ENCODE measurements at regions of chr1 and their contacts with region 1.

Region 1: DNA sequence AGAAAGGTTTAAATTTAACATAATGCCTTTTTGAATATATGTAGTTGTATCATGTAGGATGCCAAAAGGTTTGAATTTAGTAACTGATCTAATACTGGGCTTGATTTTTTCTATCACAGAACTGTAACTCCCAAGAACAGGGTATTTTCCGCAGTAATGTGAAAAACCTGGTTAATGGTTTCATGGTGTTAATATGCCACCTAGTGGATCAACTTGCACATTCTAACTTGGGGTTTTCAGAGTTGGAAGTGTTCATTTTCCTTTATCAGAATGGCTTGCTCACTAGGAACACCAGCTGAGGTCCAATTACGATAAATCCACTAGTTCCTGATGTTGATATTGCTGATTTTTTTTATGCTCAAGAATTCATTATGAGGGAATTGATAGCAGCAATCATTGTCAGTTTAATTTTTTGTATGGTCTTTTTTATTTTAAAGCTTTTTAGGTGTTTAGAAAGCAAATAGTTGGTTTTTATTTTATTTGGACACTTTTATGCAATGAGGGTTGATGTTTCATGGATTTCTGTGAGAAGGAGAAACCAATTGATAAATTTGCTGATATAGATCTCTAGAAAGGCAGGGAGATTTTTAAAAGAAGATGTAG is 157.2 kb downstream of the PLA2G4A start:
- DNase-seq: peak; percentile 77
- H3K4me3 ChIP-seq: no peak overlapping the region
- H3K27ac ChIP-seq: no peak overlapping the region
- H3K4me1 ChIP-seq: no peaks in the 10 kb centered on the region
- H3K27me3 ChIP-seq: no peaks in the 10 kb centered on the region

Region 2: DNA sequence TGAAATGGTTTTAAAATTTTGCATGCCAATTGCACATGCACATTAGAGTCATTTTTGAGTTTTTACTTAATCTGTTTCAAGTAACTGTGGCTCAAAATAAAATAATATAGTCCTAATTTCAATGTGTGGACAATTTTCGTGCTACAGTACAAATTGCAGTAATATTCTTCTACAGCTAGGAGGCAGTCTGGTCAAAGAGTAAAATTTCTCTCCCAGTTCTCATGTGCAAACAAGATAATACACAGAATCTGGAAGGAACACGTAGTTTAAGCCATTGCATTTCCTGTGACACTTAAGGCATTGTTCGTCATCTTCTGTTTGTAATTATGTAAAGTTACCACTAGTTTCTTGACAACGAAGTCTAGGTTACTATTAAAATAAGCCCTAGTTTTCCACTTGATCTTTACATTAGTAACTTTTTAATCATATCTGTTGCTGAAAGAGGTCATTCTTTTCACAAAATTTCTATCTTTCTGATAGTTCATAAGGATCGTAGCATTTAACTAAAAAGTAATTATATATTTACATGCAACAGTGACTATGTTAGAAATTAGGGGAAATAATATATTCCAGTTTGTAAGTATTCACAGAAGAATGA is 581.4 kb before region 1 on chr1:
- in situ Hi-C with region 1: loop called (anchors 10 kb)
- DNase-seq: peak; percentile 85
- H3K4me3 ChIP-seq: no peak overlapping the region
- H3K27ac ChIP-seq: peak overlapping the region; percentile 58
- H3K4me1 ChIP-seq: peaks cover 20% of the 10 kb centered on the region
- H3K27me3 ChIP-seq: no peaks in the 10 kb centered on the region

Region 3: DNA sequence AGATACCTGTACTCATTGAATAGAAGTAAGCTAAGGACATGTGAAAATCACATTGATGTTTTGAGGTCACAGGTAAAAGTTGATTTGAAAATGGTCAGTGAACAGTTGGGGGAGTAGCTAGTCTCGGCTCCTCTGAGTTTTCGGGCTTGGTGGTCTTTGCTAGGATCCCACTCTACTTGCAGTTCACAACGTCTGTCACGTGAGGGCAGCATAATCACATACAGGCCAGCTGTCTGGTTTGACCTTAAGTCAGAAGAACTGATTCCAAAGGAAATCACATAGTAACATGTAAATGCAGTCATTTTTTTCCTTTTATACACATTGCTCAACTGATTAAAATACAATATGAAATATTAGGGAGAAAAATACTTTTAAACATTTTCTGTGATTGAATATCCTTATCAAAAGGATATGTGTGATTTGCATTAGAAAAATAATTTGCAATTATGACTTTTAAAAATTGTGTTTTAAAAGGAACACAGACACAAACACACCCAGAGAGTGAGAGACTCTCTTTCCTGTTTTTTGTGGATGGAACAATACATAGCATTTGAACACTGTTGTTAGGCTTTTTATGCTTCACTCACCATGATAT is 503.2 kb before region 1 on chr1:
- in situ Hi-C with region 1: loop called (anchors 10 kb)
- DNase-seq: peak; percentile 80
- H3K4me3 ChIP-seq: no peak overlapping the region
- H3K27ac ChIP-seq: no peak overlapping the region
- H3K4me1 ChIP-seq: peaks cover 16% of the 10 kb centered on the region
- H3K27me3 ChIP-seq: no peaks in the 10 kb centered on the region

Region 4: GRCh38 chr1:186605762-186606350 is 380.1 kb before region 1 on chr1:
- in situ Hi-C with region 1: loop called (anchors 5 kb)
- DNase-seq: peak; percentile 80
- H3K4me3 ChIP-seq: no peak overlapping the region
- H3K27ac ChIP-seq: no peak overlapping the region
- H3K4me1 ChIP-seq: no peaks in the 10 kb centered on the region
- H3K27me3 ChIP-seq: no peaks in the 10 kb centered on the region

Region 5: DNA sequence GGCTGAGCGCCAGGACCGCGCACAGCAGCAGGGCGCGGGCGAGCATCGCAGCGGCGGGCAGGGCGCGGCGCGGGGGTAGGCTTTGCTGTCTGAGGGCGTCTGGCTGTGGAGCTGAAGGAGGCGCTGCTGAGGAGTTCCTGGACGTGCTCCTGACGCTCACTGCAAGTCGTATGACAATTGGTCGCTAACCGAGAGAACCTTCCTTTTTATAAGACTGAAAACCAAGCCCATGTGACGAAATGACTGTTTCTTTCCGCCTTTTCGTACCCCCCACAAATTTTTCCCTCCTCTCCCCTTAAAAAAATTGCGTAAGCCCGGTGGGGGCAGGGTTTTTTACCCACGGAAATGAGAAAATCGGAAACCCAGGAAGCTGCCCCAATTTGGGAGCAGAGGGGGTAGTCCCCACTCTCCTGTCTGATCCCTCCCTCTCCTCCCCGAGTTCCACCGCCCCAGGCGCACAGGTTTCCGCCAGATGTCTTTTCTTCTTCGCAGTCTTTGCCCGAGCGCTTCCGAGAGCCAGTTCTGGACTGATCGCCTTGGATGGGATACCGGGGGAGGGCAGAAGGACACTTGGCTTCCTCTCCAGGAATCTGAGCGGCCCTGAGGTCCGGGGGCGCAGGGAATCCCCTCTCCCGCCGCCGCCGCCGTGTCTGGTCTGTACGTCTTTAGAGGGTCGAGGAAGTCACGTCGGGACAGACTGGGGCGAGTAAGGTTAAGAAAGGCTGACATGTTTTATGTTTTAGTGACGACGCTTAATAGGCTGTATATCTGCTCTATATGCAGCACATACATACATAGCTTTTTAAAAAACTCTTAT is 305.5 kb before region 1 on chr1 and contains the start of gene PTGS2:
- in situ Hi-C with region 1: loop called (anchors 10 kb)
- DNase-seq: peak; percentile 97
- H3K4me3 ChIP-seq: peak within 1 kb of the TSS; percentile 91
- H3K27ac ChIP-seq: peak within 1 kb of the TSS; percentile 90
- H3K4me1 ChIP-seq: peaks cover 16% of the 10 kb centered on the region
- H3K27me3 ChIP-seq: no peaks in the 10 kb centered on the region
- total RNA-seq, gene PTGS2: 67.9 and 69.3 TPM in 2 replicates

Region 6: DNA sequence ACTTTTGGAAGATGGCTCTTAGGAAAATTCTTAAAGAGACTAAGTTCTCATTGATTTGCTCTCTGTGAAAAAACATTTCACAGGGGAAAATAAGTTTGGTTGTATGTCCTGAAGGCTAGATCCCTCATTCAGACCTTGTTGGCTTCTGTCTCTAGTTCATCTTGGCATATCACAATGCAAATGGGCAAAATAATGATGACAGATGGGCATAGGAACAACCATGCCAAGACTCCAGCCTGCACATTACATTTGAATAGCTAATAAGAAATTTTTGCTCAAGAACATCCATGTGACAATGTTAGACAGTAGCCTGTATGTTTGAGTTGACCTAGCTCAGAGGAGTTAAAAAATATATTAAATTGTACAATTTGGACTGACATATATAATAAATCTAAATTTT is 135.7 kb after region 1 on chr1:
- in situ Hi-C with region 1: no loop called
- DNase-seq: no peak
- H3K4me3 ChIP-seq: no peak overlapping the region
- H3K27ac ChIP-seq: no peak overlapping the region
- H3K4me1 ChIP-seq: no peaks in the 10 kb centered on the region
- H3K27me3 ChIP-seq: no peaks in the 10 kb centered on the region

Measured in GM23248 (cell line).